RWPE1 (cell line): ENCODE measurements at regions of chr2 and their contacts with region 1.

Region 1: GRCh38 chr2:170495938-170496337 is 219.2 kb upstream of the SP5 start:
- DNase-seq: no peak
- H3K27ac ChIP-seq: no peak overlapping the region
- CTCF ChIP-seq: no peak

Region 2: DNA sequence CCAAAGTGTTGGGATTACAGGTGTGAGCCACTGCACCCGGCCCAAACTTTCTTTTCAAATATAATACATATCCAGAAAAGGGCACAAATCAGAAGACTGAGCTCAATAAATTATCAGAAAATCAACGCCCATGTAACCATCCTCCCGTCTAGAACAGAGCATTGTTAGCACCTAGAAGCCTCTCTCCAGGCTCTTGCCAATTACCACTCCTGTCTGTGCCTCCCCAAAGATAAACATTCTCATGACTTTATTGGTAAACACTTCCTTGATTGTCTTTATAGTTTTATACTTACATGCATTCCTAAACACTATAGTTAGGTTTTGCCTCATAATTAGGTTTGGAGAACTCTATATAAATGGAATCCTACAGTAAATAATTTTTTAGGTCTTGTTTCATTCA is 160.7 kb after region 1 on chr2:
- CTCF ChIA-PET with region 1: interaction called, 11 read pairs
- POLR2A ChIA-PET with region 1: no interaction called
- DNase-seq: no peak
- H3K27ac ChIP-seq: no peak overlapping the region
- CTCF ChIP-seq: no peak